Breast epithelium (tissue), 4 donors: ENCODE measurements at regions of chr14 and their contacts with region 1.

Region 1: DNA sequence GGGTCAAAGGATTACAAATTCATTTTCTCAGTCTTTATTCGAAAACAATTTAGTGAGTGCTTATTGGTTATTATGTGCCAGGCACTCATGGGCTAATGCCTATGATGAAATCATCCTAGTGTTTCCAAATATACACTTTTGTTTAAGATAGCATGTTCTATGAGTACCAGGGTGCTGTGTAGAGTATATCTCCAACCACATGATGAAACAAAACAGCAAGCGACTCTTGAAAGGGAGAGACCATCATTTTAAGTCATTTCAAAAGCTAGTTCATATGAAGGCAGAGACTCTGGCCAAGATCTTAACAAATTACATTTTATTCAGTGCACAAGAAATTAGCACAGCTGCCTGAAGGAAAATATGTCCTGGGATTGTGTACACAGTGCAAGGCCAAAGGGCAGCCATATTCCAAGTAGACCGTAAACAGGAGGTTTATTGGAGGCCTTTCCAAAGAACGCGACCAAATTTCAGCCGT is 204.2 kb downstream of the EFCAB11 start:
- DNase-seq: no peak
- H3K4me3 ChIP-seq: no peak overlapping the region
- H3K27ac ChIP-seq: no peak overlapping the region
- H3K4me1 ChIP-seq: no peaks in the 10 kb centered on the region
- H3K27me3 ChIP-seq: no peaks in the 10 kb centered on the region
- CTCF ChIP-seq: no peak
- POLR2A ChIP-seq: no peak

Region 2: GRCh38 chr14:89767861-89768268 is 17.5 kb after region 1 on chr14:
- intact Hi-C with region 1: loop called (anchors 1 kb)
- DNase-seq: no peak
- H3K4me3 ChIP-seq: no peak overlapping the region
- H3K27ac ChIP-seq: no peak overlapping the region
- H3K4me1 ChIP-seq: no peaks in the 10 kb centered on the region
- H3K27me3 ChIP-seq: no peaks in the 10 kb centered on the region
- CTCF ChIP-seq: peak in 2 of 3 donors; percentile 32 to 47
- POLR2A ChIP-seq: no peak

Region 3: DNA sequence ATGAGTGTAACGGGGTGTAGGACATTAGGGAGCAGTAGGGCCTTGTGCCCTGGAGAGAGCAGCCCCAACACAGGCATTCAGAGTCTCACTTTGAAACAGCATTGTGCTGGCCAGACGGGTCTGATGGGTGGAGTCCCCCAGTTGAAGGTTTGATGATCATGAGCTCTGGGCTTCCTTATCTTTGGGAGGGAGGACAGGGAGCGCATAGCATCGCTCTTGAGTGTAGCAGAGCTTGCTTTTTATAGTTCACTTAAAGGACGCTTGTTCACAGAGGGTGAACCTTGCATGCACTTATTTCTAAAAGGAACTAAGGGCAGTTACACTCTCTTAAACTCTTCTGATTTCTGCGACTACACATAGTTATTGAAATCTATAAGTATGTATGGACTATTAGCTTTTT is 322.0 kb after region 1 on chr14:
- intact Hi-C with region 1: no loop called
- DNase-seq: no peak
- H3K4me3 ChIP-seq: no peak overlapping the region
- H3K27ac ChIP-seq: no peak overlapping the region
- H3K4me1 ChIP-seq: no peaks in the 10 kb centered on the region
- H3K27me3 ChIP-seq: peaks cover 0 to 6% of the 10 kb centered on the region in 2 donors
- CTCF ChIP-seq: no peak
- POLR2A ChIP-seq: no peak